ENCODE measurements at regions of chr4 and their contacts with region 1.

Region 1: DNA sequence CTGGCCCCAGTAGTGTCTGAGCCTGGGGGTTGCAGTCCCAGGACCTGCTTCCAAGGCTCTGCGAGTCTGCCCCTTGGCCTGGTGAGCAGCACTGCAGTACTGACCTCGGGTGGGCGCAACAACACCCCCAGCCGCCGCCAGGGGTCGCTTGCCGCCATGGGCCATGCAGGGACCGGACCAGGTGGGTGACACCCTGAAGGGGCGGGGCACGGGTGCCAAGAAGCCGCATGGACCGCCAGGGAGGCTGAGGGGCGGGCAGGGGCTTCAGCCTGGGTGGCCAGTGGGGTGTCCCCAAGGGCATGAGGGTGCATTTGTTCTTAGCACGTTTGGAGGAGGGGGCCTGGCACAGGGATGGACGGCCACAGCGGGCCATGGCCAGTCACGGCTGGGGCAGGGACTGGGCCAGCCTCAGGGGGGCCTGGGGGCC is 25.0 kb downstream of the TACC3 start:
- DNase-seq: peak; percentile 94
- H3K4me3 Mint-ChIP-seq: no peak overlapping the region
- H3K27ac Mint-ChIP-seq: no peak overlapping the region
- H3K4me1 Mint-ChIP-seq: no peaks in the 10 kb centered on the region
- H3K27me3 Mint-ChIP-seq: no peaks in the 10 kb centered on the region

Region 2: GRCh38 chr4:1410491-1411325 is 335.6 kb before region 1 on chr4:
- intact Hi-C with region 1: no loop called
- DNase-seq: peak; percentile 83
- H3K4me3 Mint-ChIP-seq: no peak overlapping the region
- H3K27ac Mint-ChIP-seq: no peak overlapping the region
- H3K4me1 Mint-ChIP-seq: peaks cover 4% of the 10 kb centered on the region
- H3K27me3 Mint-ChIP-seq: peaks cover 23% of the 10 kb centered on the region

Region 3: GRCh38 chr4:1660948-1661677 is 85.2 kb before region 1 on chr4:
- intact Hi-C with region 1: no loop called
- DNase-seq: no peak
- H3K4me3 Mint-ChIP-seq: no peak overlapping the region
- H3K27ac Mint-ChIP-seq: no peak overlapping the region
- H3K4me1 Mint-ChIP-seq: no peaks in the 10 kb centered on the region
- H3K27me3 Mint-ChIP-seq: no peaks in the 10 kb centered on the region

Region 4: DNA sequence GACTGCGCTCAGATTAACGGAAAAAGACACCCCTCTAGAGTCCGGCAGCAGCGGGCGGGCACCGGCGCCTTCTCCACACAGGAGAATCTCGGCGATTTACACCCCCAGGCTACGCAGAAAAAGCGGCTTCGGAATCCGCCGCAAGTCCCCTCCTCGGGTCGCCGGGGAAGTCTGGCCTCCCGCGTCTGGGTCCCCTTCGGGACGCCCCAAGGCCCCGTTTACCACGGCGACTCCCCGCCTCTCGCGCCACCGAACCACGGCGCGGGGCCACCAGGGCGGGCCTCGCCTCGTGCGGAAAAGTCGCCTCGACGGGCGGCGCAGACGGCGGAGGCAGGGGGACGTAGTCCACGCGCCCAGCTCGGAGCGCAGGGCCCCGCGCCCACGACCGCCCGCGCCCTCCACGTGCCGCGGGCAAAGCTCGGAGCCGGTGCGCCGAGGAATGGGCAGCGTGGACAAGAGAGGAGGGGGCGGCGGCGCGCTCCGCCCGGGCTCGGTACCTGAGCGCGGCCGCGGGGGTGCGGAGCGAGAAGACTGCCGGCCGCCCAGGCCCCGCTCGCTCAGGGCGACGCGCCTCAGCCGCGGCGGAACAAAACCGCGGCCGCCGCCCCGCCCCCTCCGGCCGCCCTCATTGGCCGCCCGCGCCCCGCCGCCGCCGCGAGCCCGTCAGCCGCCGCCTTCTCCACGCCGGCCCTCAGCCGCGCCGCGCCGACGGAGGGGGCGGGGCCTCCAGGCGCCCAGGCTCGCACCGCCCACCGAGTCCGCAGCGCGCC is 62.4 kb before region 1 on chr4 and contains the start of gene FAM53A:
- intact Hi-C with region 1: no loop called
- DNase-seq: no peak
- H3K4me3 Mint-ChIP-seq: peak within 1 kb of the TSS; percentile 83
- H3K27ac Mint-ChIP-seq: peak within 1 kb of the TSS; percentile 88
- H3K4me1 Mint-ChIP-seq: peaks cover 12% of the 10 kb centered on the region
- H3K27me3 Mint-ChIP-seq: peaks cover 2% of the 10 kb centered on the region
- total RNA-seq, gene FAM53A: 3.5 and 4.0 TPM in 2 replicates

Region 5: GRCh38 chr4:1809754-1810511 is 63.7 kb after region 1 on chr4:
- intact Hi-C with region 1: loop called (anchors 1 kb)
- DNase-seq: peak; percentile 92
- H3K4me3 Mint-ChIP-seq: no peak overlapping the region
- H3K27ac Mint-ChIP-seq: no peak overlapping the region
- H3K4me1 Mint-ChIP-seq: no peaks in the 10 kb centered on the region
- H3K27me3 Mint-ChIP-seq: no peaks in the 10 kb centered on the region

Region 6: DNA sequence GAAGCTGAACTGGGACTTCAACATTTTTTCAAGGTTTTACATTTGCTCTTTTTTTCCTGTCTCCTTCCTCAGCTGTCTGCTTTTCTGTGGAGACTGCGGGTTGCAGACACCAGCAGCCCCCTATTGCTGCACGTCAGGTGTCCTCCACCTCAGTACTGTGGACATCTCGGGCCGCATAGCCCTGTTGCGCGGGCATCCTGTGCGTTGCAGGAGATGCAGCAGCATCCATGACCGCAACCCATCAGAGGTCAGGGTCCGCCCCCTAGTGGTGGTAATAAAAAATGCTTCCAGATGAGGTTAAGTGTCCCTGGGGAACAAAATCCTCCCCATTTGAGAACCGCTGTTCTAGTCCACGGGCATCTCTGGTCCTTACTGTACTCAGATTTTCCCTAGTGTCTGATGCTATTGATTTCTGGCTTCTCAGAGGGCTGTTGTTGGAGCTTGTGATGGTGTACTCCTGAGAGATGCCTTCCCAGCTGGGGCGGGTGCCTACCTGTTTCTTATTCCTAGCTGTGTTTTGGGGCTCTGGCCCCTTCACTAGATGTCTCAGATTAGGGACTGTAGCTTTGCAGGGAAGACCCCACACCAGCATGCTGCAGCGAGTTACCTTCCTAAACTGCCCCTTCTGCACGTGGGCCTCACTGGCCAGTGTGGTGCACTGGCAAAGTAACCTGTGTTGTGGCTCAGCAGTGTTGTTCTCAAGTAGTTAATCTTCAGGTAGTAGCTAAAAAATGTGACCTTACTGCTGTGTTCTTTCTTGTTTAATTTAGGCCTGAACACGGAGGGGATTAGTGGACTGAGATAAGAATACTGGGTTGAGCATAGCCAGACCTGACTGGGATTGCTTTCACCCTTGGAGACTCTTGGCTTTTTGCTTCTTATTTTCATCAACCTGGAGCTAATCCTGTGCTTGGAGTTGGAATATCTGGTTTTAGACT is 153.1 kb after region 1 on chr4:
- intact Hi-C with region 1: loop called (anchors 5 kb)
- DNase-seq: peak; percentile 94
- H3K4me3 Mint-ChIP-seq: peak overlapping the region; percentile 28
- H3K27ac Mint-ChIP-seq: peak overlapping the region; percentile 86
- H3K4me1 Mint-ChIP-seq: peaks cover 59% of the 10 kb centered on the region
- H3K27me3 Mint-ChIP-seq: no peaks in the 10 kb centered on the region

Region 7: GRCh38 chr4:1910643-1911042 is 164.4 kb after region 1 on chr4:
- intact Hi-C with region 1: loop called (anchors 5 kb)
- DNase-seq: peak; percentile 82
- H3K4me3 Mint-ChIP-seq: no peak overlapping the region
- H3K27ac Mint-ChIP-seq: no peak overlapping the region
- H3K4me1 Mint-ChIP-seq: peaks cover 45% of the 10 kb centered on the region
- H3K27me3 Mint-ChIP-seq: no peaks in the 10 kb centered on the region

Region 8: DNA sequence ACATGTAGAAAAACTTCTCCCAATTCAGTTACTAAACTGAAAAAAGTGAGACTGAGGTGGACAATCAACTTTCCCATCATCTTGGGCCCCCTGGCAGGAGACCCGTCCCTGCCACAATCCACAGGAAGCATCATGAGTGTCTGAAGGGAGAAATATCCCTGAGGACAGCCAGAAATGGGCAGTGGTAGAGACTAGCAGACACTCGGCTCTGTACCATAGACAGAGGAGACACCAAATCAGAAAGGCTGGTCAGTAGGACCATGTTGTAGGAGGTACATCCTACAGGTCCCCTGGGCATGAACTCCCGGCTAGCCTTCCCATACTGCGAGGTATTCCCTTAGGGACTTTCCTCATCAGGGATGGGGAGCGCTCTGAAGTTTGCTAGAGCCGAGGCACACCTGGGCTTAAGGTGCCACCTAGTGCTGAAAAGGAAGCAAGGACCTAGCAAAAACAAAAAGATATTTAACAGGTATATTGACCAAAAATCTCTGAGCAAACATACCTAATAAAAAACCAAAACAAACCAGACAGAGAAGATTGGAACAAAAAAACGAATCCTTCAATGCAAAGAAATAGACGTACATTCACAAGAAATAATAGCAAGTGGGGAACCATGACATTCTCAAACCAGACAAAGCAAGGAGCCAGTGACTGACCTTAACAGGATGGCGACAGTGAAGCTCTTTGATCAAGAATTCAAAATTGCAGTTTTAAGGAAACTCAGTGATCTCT is 440.0 kb after region 1 on chr4:
- intact Hi-C with region 1: loop called (anchors 2 kb)
- DNase-seq: peak; percentile 72
- H3K4me3 Mint-ChIP-seq: no peak overlapping the region
- H3K27ac Mint-ChIP-seq: no peak overlapping the region
- H3K4me1 Mint-ChIP-seq: peaks cover 4% of the 10 kb centered on the region
- H3K27me3 Mint-ChIP-seq: no peaks in the 10 kb centered on the region